ENCODE measurements at regions of chr1 and their contacts with region 1.

Region 1: GRCh38 chr1:212683357-212683722 is 16.3 kb downstream of the BATF3 start:
- DNase-seq: peak; percentile 90
- H3K4me3 Mint-ChIP-seq: peak overlapping the region; percentile 40
- H3K27ac Mint-ChIP-seq: peak overlapping the region; percentile 89
- H3K4me1 Mint-ChIP-seq: peaks cover 58% of the 10 kb centered on the region
- H3K27me3 Mint-ChIP-seq: peaks cover 2% of the 10 kb centered on the region

Region 2: GRCh38 chr1:212110617-212111016 is 572.7 kb before region 1 on chr1:
- CTCF ChIA-PET with region 1: no interaction called
- POLR2A ChIA-PET with region 1: no interaction called
- intact Hi-C with region 1: no loop called
- DNase-seq: no peak
- H3K4me3 Mint-ChIP-seq: no peak overlapping the region
- H3K27ac Mint-ChIP-seq: no peak overlapping the region
- H3K4me1 Mint-ChIP-seq: no peaks in the 10 kb centered on the region
- H3K27me3 Mint-ChIP-seq: no peaks in the 10 kb centered on the region

Region 3: GRCh38 chr1:212566522-212567479 is 116.5 kb before region 1 on chr1:
- CTCF ChIA-PET with region 1: no interaction called
- POLR2A ChIA-PET with region 1: interaction called, 5 read pairs
- intact Hi-C with region 1: loop called (anchors 2 kb)
- DNase-seq: peak; percentile 79
- H3K4me3 Mint-ChIP-seq: peak overlapping the region; percentile 73
- H3K27ac Mint-ChIP-seq: peak overlapping the region; percentile 82
- H3K4me1 Mint-ChIP-seq: peaks cover 33% of the 10 kb centered on the region
- H3K27me3 Mint-ChIP-seq: peaks cover 2% of the 10 kb centered on the region

Region 4: DNA sequence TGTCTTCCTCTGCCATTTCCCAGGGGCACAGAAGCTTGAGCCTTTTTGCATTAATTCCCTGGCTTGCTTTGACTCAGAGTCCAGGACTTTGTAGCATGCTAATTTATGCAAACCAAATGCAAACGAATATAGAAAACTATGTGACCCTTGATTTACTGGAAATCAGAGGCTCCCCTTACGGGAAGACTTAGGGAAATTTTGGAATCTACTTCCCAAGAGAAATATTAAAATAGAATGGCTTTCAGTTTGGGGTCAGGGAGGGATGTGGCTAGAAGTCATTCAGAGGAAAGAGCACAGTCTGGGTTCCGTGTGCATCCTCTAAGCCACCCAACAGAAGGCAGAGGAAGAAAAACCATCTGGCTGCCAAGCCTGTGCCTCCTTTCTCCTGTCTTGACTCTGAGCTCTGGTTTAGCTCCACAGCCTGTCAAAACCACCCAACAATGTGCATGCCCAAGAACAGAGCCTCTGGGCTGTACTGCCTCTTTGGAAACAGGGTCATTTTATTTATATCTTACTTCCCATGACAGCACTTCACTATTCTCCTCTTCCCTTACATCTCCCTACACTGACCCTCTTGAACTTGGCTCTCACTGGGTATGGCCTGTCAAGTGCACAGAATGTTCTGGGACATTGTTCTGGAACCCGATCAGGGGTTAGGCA is 44.7 kb before region 1 on chr1:
- CTCF ChIA-PET with region 1: no interaction called
- POLR2A ChIA-PET with region 1: no interaction called
- intact Hi-C with region 1: no loop called
- DNase-seq: no peak
- H3K4me3 Mint-ChIP-seq: no peak overlapping the region
- H3K27ac Mint-ChIP-seq: no peak overlapping the region
- H3K4me1 Mint-ChIP-seq: peaks cover 33% of the 10 kb centered on the region
- H3K27me3 Mint-ChIP-seq: peaks cover 6% of the 10 kb centered on the region

Region 5: DNA sequence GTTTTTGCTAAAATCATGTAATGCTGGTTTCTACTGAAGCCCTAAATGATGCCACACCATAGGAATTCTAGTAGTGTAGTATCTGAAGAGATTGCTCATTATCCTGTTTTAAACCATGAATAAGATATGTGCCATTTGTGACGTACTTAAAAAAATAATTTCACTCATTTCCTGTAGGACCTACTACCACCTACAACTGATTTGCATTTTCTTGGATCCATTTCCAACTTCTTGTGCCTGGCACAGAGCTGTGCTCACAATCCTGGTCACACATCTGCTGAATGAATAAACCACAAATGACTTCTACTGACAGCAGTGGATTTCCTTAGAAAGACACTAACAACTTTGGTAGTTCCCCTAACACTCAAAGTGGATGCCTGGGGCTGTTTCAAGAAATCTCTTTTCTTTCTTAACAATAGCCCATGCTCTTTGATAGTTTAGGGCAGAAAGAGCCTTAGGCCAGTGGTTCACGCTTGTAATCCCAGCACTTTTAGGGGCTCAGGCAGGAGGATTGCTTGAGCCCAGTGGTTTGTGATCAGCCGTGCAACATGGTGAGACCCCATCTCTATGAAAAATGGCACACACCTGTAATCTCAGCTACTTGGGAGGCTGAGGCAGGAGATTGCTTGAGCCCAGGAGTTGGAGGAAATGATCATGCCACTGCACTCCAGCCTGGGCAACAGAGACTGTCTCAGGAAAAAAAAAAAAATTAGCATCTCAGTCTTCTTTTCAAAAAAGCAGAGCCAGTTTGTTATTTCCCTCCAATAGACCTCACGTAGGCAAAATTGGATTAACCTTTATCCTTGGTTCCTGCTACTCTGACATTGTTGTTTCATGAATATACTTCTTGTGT is 29.3 kb after region 1 on chr1:
- CTCF ChIA-PET with region 1: no interaction called
- POLR2A ChIA-PET with region 1: interaction called, 3 read pairs
- intact Hi-C with region 1: loop called (anchors 2 kb)
- DNase-seq: peak; percentile 61
- H3K4me3 Mint-ChIP-seq: no peak overlapping the region
- H3K27ac Mint-ChIP-seq: peak overlapping the region; percentile 95
- H3K4me1 Mint-ChIP-seq: peaks cover 47% of the 10 kb centered on the region
- H3K27me3 Mint-ChIP-seq: no peaks in the 10 kb centered on the region

Region 6: DNA sequence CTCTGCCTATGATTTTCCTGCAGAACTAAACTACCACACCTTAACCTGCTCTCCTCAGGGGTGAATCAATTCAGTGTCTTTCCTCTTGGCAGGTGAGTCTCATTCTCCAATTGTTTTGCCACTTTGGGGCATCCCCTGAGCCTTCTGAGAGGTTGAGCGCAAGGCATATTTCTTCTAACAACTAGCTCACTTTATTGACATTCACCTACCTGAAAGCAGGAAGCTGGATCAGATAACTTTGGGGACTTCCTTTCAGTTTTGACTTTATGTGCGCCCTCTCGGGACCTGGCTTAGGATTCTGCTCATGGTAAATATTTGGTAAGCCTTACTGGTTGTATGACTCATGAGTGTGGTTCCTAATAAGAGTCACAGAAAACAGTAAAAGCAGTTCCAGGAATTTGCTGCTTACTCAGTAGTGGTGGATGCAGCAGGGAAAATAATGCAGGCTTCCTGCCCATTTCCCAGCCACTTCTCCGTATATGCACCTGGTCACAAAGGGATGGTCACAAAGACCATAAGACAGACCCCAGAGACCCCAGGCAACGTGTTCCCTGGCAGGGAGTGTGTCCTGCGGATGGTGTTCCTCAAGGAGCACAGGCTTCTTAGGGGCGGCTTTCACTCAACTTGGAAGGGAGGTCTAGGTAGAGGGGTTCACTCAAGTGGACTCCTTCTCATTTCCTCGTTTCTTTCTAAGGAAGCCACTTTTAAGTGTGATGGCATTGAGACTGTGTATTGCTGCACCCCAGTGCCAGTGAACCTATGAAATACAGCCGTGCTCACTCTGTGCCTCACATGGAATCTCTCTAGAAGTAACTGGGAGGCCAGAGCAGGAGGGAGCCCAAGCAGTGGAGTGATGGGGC is 38.3 kb after region 1 on chr1:
- CTCF ChIA-PET with region 1: interaction called, 4 read pairs
- POLR2A ChIA-PET with region 1: interaction called, 11 read pairs
- intact Hi-C with region 1: loop called (anchors 1 kb)
- DNase-seq: peak; percentile 77
- H3K4me3 Mint-ChIP-seq: peak overlapping the region; percentile 63
- H3K27ac Mint-ChIP-seq: peak overlapping the region; percentile 94
- H3K4me1 Mint-ChIP-seq: peaks cover 58% of the 10 kb centered on the region
- H3K27me3 Mint-ChIP-seq: peaks cover 3% of the 10 kb centered on the region

Region 7: GRCh38 chr1:212782422-212783154 is 99.2 kb after region 1 on chr1:
- CTCF ChIA-PET with region 1: interaction called, 4 read pairs
- POLR2A ChIA-PET with region 1: no interaction called
- intact Hi-C with region 1: loop called (anchors 1 kb)
- DNase-seq: no peak
- H3K4me3 Mint-ChIP-seq: no peak overlapping the region
- H3K27ac Mint-ChIP-seq: peak overlapping the region; percentile 6
- H3K4me1 Mint-ChIP-seq: peaks cover 37% of the 10 kb centered on the region
- H3K27me3 Mint-ChIP-seq: no peaks in the 10 kb centered on the region